CD4-positive, alpha-beta memory T cell (primary cell): ENCODE measurements at regions of chr14 and their contacts with region 1.

Region 1: GRCh38 chr14:65847075-65847847 is 434.7 kb downstream of the FUT8 start:
- DNase-seq: peak; percentile 88 to 93 (median 90)
- H3K4me3 ChIP-seq: peak overlapping the region; percentile 30 to 43
- H3K4me3 Mint-ChIP-seq: peak overlapping the region; percentile 65 to 90 (median 80)
- H3K27ac ChIP-seq: peak overlapping the region; percentile 57
- H3K27ac Mint-ChIP-seq: peak overlapping the region; percentile 91 to 98 (median 96)
- H3K4me1 ChIP-seq: peaks cover 98% of the 10 kb centered on the region
- H3K4me1 Mint-ChIP-seq: peaks cover 64 to 92% (median 79%) of the 10 kb centered on the region in 4 donors
- H3K27me3 ChIP-seq: no peaks in the 10 kb centered on the region
- H3K27me3 Mint-ChIP-seq: no peaks in the 10 kb centered on the region

Region 2: DNA sequence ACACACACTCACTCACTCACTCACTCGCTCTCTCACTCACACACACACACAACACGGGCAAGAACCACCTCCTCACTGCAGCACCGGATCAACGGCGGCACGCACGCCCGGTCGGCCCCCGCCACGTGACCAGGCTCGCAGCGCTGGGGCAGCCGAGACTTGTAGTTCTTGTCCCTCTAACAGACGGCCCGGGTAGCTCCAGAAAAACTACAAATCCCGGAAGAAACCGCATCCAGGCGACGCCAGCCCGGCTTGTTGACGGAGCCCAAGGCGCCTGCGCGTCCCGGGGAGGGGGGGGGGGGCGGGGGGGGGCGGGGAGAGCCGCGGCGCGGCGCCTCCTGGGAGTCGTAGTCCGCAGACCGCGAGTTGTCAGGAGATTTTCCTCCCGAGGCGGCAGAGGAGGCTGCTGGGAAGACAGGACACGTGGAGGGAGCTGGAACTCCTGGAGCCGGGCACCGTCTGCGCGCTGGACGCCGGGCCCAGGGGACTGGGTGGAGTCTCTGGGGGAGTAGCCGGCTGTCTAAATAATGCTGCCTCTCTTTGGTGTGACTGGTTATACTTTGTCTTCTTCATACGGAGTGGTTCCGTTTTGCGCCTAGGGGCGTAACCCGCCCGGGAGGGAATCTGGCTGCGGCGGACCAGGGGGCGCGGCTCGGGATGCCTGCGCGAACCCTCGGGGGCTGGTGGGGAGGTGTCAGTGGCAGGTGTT is 744.7 kb before region 1 on chr14 and contains the start of gene MAX:
- CTCF ChIA-PET with region 1: no interaction called
- POLR2A ChIA-PET with region 1: interaction called, 8 read pairs
- intact Hi-C with region 1: loop called (anchors 2 kb)
- DNase-seq: peak; percentile 98 to 100 (median 100)
- H3K4me3 ChIP-seq: peak within 1 kb of the TSS; percentile 77 to 100
- H3K4me3 Mint-ChIP-seq: peak within 1 kb of the TSS; percentile 91 to 100 (median 96)
- H3K27ac ChIP-seq: peak within 1 kb of the TSS; percentile 96
- H3K27ac Mint-ChIP-seq: peak within 1 kb of the TSS; percentile 92 to 99 (median 97)
- H3K4me1 ChIP-seq: peaks cover 41% of the 10 kb centered on the region
- H3K4me1 Mint-ChIP-seq: peaks cover 24 to 49% (median 35%) of the 10 kb centered on the region in 4 donors
- H3K27me3 ChIP-seq: no peaks in the 10 kb centered on the region
- H3K27me3 Mint-ChIP-seq: peaks cover 2 to 3% of the 10 kb centered on the region in 2 donors
- total RNA-seq, gene MAX: 188 to 212 TPM

Region 3: GRCh38 chr14:65750906-65751305 is 96.4 kb before region 1 on chr14:
- CTCF ChIA-PET with region 1: no interaction called
- POLR2A ChIA-PET with region 1: no interaction called
- intact Hi-C with region 1: no loop called
- DNase-seq: no peak
- H3K4me3 ChIP-seq: no peak overlapping the region
- H3K4me3 Mint-ChIP-seq: no peak overlapping the region
- H3K27ac ChIP-seq: no peak overlapping the region
- H3K27ac Mint-ChIP-seq: peak overlapping the region in 3 of 7 donors; percentile 23 to 82 (median 48)
- H3K4me1 ChIP-seq: no peaks in the 10 kb centered on the region
- H3K4me1 Mint-ChIP-seq: peaks cover 0 to 14% (median 2%) of the 10 kb centered on the region in 4 donors
- H3K27me3 ChIP-seq: no peaks in the 10 kb centered on the region
- H3K27me3 Mint-ChIP-seq: no peaks in the 10 kb centered on the region

Region 4: DNA sequence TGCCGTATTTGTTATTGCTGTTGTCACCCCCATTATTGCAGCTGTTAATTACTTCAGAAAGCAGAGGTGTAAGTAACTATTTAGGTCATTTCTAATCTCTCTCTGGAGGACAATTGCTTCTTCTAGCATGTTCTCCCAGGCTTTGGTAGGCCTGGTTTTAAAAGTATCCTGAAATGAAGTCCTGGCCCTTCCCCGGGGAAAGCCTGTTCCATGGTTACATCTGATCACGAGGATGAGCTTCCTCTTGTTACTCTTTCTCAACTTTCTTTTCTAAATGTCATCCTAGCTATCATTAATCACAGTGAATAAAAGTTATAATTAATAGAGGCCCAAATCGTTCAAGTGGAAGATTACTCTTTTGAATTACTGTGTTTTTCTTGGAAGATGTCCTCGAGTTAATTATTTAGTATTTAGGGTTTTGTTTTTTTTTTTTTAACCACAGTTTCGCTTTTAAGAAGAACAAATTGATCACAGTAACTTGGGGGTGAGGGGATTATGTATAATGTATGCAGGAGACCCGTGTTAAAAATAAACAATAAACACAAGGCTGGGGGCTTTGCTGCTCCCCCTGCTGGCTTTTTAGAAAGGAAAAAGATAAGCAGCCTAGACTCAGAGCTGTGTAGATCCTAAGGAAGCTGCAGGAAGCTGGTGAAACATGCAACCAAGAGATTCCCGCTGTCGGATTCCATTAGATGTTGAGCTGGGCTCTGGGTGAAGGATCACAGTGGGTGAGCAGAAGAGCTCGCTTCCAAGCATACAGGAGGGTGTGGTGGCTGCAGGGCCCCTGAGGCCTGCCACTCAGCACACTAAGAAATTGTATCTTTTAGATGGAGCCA is 14.6 kb before region 1 on chr14:
- CTCF ChIA-PET with region 1: interaction called, 19 read pairs
- POLR2A ChIA-PET with region 1: interaction called, 13 read pairs
- intact Hi-C with region 1: no loop called
- DNase-seq: no peak
- H3K4me3 ChIP-seq: no peak overlapping the region
- H3K4me3 Mint-ChIP-seq: no peak overlapping the region
- H3K27ac ChIP-seq: no peak overlapping the region
- H3K27ac Mint-ChIP-seq: peak overlapping the region in 1 of 7 donors; percentile 41
- H3K4me1 ChIP-seq: peaks cover 16% of the 10 kb centered on the region
- H3K4me1 Mint-ChIP-seq: peaks cover 27 to 37% (median 30%) of the 10 kb centered on the region in 4 donors
- H3K27me3 ChIP-seq: no peaks in the 10 kb centered on the region
- H3K27me3 Mint-ChIP-seq: no peaks in the 10 kb centered on the region

Region 5: DNA sequence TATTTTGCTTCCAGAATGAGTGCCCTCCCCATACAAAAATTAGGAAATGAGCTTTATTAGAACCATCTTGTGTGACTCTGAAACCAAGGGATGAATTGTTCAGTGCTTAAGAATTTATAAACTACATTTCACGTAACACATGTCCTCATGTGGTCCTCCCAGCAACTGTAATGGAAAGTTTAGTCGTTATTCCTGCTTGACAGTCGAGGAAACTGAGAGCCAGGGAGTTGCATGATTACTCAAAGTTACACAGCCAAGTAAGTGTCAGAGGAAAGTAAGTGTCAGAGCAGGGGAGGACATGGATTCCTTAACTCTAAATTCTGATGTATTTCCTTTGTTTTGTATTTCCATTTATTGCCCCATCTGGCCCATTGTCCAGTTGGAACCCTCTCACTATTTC is 19.2 kb after region 1 on chr14:
- CTCF ChIA-PET with region 1: interaction called, 19 read pairs
- POLR2A ChIA-PET with region 1: interaction called, 52 read pairs
- intact Hi-C with region 1: loop called (anchors 2 kb)
- DNase-seq: no peak
- H3K4me3 ChIP-seq: no peak overlapping the region
- H3K4me3 Mint-ChIP-seq: no peak overlapping the region
- H3K27ac ChIP-seq: no peak overlapping the region
- H3K27ac Mint-ChIP-seq: no peak overlapping the region
- H3K4me1 ChIP-seq: peaks cover 33% of the 10 kb centered on the region
- H3K4me1 Mint-ChIP-seq: peaks cover 31 to 47% (median 37%) of the 10 kb centered on the region in 4 donors
- H3K27me3 ChIP-seq: no peaks in the 10 kb centered on the region
- H3K27me3 Mint-ChIP-seq: no peaks in the 10 kb centered on the region

Region 6: GRCh38 chr14:65927931-65928356 is 80.7 kb after region 1 on chr14:
- CTCF ChIA-PET with region 1: interaction called, 15 read pairs
- POLR2A ChIA-PET with region 1: interaction called, 102 read pairs
- intact Hi-C with region 1: loop called (anchors 1 kb)
- DNase-seq: peak; percentile 66 to 78 (median 73)
- H3K4me3 ChIP-seq: peak overlapping the region in 1 of 2 donors; percentile 22
- H3K4me3 Mint-ChIP-seq: peak overlapping the region; percentile 45 to 81 (median 73)
- H3K27ac ChIP-seq: peak overlapping the region; percentile 42
- H3K27ac Mint-ChIP-seq: peak overlapping the region; percentile 81 to 96 (median 92)
- H3K4me1 ChIP-seq: peaks cover 55% of the 10 kb centered on the region
- H3K4me1 Mint-ChIP-seq: peaks cover 52 to 72% (median 64%) of the 10 kb centered on the region in 4 donors
- H3K27me3 ChIP-seq: no peaks in the 10 kb centered on the region
- H3K27me3 Mint-ChIP-seq: no peaks in the 10 kb centered on the region

Region 7: DNA sequence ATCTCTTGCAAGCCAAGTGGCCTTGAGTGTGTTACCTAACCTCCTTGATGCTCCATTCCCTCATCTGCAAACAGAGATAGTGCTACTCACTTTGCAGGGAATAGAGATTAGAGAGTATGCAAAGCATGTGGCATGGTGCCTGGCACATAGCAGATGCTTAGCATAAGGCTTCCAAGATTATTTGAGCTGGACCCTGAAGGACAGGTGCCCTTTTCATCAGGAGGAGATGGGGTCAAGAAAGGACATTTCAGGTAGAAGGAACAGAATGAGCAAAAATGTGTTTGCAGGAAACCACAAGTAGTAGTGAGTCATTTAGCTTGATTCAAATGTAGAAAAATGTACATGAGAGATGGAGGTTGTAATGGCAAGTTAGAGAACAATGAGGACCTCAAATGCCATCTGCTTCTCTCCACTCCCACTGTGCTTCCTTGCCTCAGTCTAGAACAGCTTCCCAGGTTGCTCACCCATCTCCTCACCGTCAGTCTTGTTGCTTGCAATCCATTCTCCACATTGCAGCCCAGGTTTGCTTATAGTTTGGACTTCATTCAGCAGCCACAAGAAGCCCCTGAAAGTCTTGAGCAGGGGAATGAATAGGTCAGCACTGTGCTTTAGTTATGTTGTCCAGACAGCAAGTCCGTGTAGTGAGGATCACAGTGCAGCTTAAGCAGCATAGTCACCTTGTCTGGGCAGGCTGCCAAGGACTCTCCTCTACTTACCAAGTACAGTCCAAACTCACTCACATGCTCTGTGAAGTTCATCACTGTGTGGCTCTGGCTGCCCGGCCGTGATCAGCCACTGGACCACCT is 102.7 kb after region 1 on chr14:
- CTCF ChIA-PET with region 1: interaction called, 9 read pairs
- POLR2A ChIA-PET with region 1: interaction called, 15 read pairs
- intact Hi-C with region 1: no loop called
- DNase-seq: no peak
- H3K4me3 ChIP-seq: no peak overlapping the region
- H3K4me3 Mint-ChIP-seq: peak overlapping the region in 5 of 8 donors; percentile 17 to 67 (median 30)
- H3K27ac ChIP-seq: no peak overlapping the region
- H3K27ac Mint-ChIP-seq: peak overlapping the region in 6 of 7 donors; percentile 3 to 76 (median 64)
- H3K4me1 ChIP-seq: peaks cover 19% of the 10 kb centered on the region
- H3K4me1 Mint-ChIP-seq: peaks cover 17 to 59% (median 27%) of the 10 kb centered on the region in 4 donors
- H3K27me3 ChIP-seq: no peaks in the 10 kb centered on the region
- H3K27me3 Mint-ChIP-seq: no peaks in the 10 kb centered on the region

Region 8: DNA sequence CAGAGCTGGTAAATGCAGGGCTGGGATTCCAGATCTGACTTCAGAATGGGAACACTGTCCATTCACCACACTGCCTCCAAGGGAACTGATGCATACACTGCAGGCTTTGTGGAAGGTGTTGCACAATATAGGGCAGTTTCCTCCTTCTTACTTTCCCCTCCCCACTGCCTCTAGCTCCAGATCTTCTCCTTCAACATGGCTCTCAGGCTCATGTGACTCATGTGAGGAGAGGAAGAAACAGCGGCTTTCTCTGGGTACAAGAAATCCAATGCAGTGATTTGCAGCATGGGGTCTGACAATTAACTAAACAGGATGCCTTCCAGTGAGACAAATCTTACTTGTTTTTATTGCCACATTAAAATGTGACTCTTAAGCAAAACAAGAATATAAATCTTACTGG is 191.4 kb after region 1 on chr14:
- CTCF ChIA-PET with region 1: no interaction called
- POLR2A ChIA-PET with region 1: no interaction called
- intact Hi-C with region 1: no loop called
- DNase-seq: no peak
- H3K4me3 ChIP-seq: no peak overlapping the region
- H3K4me3 Mint-ChIP-seq: no peak overlapping the region
- H3K27ac ChIP-seq: no peak overlapping the region
- H3K27ac Mint-ChIP-seq: no peak overlapping the region
- H3K4me1 ChIP-seq: no peaks in the 10 kb centered on the region
- H3K4me1 Mint-ChIP-seq: no peaks in the 10 kb centered on the region
- H3K27me3 ChIP-seq: no peaks in the 10 kb centered on the region
- H3K27me3 Mint-ChIP-seq: peaks cover 3 to 5% of the 10 kb centered on the region in 2 donors

Region 9: GRCh38 chr14:66078006-66078405 is 230.7 kb after region 1 on chr14:
- CTCF ChIA-PET with region 1: no interaction called
- POLR2A ChIA-PET with region 1: no interaction called
- intact Hi-C with region 1: no loop called
- DNase-seq: no peak
- H3K4me3 ChIP-seq: no peak overlapping the region
- H3K4me3 Mint-ChIP-seq: no peak overlapping the region
- H3K27ac ChIP-seq: no peak overlapping the region
- H3K27ac Mint-ChIP-seq: no peak overlapping the region
- H3K4me1 ChIP-seq: no peaks in the 10 kb centered on the region
- H3K4me1 Mint-ChIP-seq: no peaks in the 10 kb centered on the region
- H3K27me3 ChIP-seq: peaks cover 5% of the 10 kb centered on the region
- H3K27me3 Mint-ChIP-seq: peaks cover 6 to 11% of the 10 kb centered on the region in 2 donors